ENCODE measurements at regions of chr16 and their contacts with region 1.

Region 1: GRCh38 chr16:70715055-70715858 is 29.4 kb upstream of the MTSS2 start:
- DNase-seq: peak; percentile 87 to 93
- ATAC-seq: peak; percentile 85 to 93
- H3K4me3 ChIP-seq: no peak overlapping the region
- H3K27ac ChIP-seq: peak overlapping the region; percentile 83 to 92
- H3K4me1 ChIP-seq: peaks cover 49% of the 10 kb centered on the region
- CTCF ChIP-seq: no peak
- EP300 ChIP-seq: peak in 1 of 2 experiments; percentile 40; a peak in 1 of 5 replicates
- POLR2A ChIP-seq: no peak
- RAD21 ChIP-seq: peak; percentile 38 to 49; a peak in 3 of 5 replicates

Region 2: GRCh38 chr16:69595127-69596036 is 1119.9 kb before region 1 on chr16:
- CTCF ChIA-PET with region 1: no interaction called
- POLR2A ChIA-PET with region 1: no interaction called
- DNase-seq: peak; percentile 28 to 37
- ATAC-seq: peak; percentile 82 to 86
- H3K4me3 ChIP-seq: peak overlapping the region; percentile 10; the same call in 2 of the 3 replicates
- H3K27ac ChIP-seq: peak overlapping the region; percentile 48 to 71
- H3K4me1 ChIP-seq: peaks cover 72% of the 10 kb centered on the region
- CTCF ChIP-seq: no peak
- EP300 ChIP-seq: no peak
- POLR2A ChIP-seq: no peak
- RAD21 ChIP-seq: no peak

Region 3: DNA sequence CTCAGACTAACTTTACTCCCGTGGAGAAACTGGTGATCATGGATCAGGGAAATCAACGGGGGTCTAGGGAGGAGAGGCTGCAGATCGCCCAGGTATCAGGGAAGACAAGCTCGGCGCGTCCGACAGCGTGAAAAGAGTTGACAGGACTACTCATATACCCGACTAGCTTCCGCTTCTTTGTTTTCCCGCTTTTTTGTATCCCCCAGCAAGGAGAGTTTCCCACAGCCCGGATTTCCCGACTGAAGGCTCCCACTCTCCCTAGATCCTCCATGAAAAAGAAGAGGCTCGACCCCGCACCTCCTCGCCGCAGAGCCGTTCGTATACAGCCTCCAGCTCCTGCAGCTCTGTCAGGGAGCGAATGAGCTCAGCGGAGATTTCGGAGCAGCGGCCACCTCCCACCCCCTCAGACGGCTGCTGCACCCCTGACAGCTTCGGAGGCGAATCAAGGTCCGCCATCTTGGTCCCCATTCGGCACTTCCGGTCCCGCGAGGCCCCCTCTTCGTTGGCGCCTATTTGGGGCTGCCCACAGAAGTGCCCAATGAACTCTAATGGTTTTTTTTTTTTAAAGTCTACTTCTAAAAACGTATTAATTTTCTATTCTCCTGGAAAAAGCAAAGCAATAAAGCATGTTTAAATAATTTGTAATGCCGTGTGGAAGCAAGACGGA is 192.0 kb before region 1 on chr16 and contains the start of gene COG4:
- CTCF ChIA-PET with region 1: interaction called, 3 read pairs
- POLR2A ChIA-PET with region 1: interaction called, 15 read pairs
- DNase-seq: peak; percentile 88
- ATAC-seq: peak; percentile 90 to 91
- H3K4me3 ChIP-seq: peak within 1 kb of the TSS; percentile 75
- H3K27ac ChIP-seq: peak within 1 kb of the TSS; percentile 86 to 93
- H3K4me1 ChIP-seq: peaks cover 37% of the 10 kb centered on the region
- CTCF ChIP-seq: no peak
- EP300 ChIP-seq: no peak
- POLR2A ChIP-seq: peak; percentile 77
- RAD21 ChIP-seq: no peak
- polyA plus RNA-seq, gene COG4: 48.2 and 53.1 TPM in 2 replicates

Region 4: DNA sequence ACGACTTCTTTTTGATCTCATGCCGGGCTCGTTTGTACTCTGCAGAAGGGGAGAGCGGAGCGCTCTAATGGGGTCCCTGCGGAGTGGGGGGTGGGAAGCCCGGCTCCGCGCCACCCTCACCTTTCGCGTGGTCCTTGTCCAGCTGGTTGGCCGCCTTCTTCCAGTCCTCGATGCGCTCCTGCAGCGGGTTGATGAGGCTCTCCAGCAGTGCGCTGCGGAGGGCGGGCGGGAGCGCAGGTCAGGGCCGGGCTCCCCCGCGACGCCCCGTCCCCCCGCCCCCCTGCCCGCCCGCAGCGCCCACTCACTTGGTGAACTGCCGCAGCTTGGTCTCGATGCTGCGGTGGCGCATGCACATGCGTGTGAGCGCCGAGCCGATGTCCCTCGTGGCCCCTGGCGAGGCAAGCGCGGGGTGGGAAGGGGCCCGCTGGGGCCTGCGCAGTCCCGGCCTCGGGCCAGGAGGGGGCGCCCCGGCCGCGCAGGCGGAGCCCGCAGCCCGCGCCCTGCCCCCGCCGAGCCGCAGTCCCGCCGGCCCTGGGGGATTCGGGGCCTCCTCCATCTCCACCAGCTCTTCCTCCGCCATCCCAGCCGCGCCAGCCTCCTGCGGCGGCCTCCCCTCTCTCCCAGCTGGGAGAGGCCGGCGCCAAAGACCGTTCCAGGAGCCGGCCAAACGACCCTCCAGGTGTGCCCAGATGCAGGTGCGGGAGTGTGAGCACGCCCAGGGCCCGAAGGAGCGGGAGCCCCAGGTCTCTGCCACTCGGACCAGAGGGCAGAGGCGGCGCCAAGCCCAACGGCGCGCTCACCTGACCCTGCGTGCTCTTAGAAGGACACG is 35.4 kb before region 1 on chr16:
- CTCF ChIA-PET with region 1: interaction called, 11 read pairs
- POLR2A ChIA-PET with region 1: no interaction called
- DNase-seq: peak in 1 of 2 experiments; percentile 54
- ATAC-seq: peak; percentile 37 to 57; a peak in 3 of 6 replicates
- H3K4me3 ChIP-seq: no peak overlapping the region
- H3K27ac ChIP-seq: peak overlapping the region; percentile 33 to 97; a peak in 3 of 6 replicates
- H3K4me1 ChIP-seq: peaks cover 54% of the 10 kb centered on the region
- CTCF ChIP-seq: peak; percentile 80
- EP300 ChIP-seq: no peak
- POLR2A ChIP-seq: no peak
- RAD21 ChIP-seq: peak; percentile 42 to 89; a peak in 4 of 5 replicates

Region 5: GRCh38 chr16:70685938-70686375 is 29.3 kb before region 1 on chr16 and contains the start of gene MTSS2:
- CTCF ChIA-PET with region 1: interaction called, 15 read pairs
- POLR2A ChIA-PET with region 1: no interaction called
- DNase-seq: peak; percentile 71 to 72
- ATAC-seq: peak; percentile 41 to 51
- H3K4me3 ChIP-seq: peak within 1 kb of the TSS; percentile 84
- H3K27ac ChIP-seq: peak within 1 kb of the TSS; percentile 92 to 97
- H3K4me1 ChIP-seq: peaks cover 84% of the 10 kb centered on the region
- CTCF ChIP-seq: no peak
- EP300 ChIP-seq: no peak
- POLR2A ChIP-seq: peak; percentile 25
- RAD21 ChIP-seq: 0 out of 5 replicates have a peak, but pooled peaks of 1 of the 2 experiments have one; percentile 21
- polyA plus RNA-seq, gene MTSS2: 10.8 and 13.1 TPM in 2 replicates

Region 6: DNA sequence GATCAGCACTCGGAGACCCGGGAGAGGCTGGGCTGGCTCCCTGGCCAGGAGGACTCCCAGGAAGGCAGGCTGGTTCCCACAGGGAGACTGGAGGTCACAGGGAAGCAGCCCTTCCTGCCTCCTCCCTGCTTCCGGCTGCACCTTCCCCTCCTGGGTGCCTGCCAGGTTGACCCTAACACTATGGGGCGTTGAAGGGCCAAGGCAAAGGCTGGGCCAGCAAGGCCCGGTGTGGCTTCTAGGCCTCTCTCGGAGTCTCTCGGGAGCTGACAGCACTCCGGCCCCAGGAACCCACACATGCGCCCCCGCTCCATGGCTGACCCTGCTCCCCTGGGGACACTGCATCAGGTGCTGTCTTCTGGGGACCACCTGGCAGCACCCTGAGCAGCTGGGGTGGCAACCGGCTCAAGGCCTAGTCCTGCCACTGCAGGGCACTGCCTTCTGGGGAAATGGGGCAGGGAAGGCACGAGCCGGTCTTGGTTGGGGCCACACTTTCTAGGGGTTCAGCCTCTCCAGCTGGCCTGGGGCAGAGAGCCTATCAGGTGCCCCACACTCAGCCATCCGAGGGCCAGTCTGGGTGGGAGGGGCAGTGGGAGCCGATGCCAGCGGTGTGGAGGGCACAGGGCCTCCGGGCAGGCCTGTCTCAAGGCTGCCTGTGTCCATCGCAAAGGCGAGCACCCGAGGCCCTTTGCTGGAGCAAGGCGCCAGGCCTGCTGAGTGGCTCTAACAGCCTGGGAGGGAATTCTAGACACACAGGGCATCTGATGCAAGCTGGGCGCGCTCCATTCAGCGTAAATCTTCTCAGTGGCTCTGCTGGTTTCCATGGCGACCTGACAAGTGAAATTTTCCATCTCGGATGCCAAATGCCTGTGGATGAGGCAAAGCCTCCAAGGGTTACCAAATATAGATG is 23.8 kb before region 1 on chr16:
- CTCF ChIA-PET with region 1: interaction called, 15 read pairs
- POLR2A ChIA-PET with region 1: no interaction called
- DNase-seq: peak in 1 of 2 experiments; percentile 67
- ATAC-seq: no peak; a peak in 1 of 6 replicates
- H3K4me3 ChIP-seq: no peak overlapping the region
- H3K27ac ChIP-seq: peak overlapping the region; percentile 97 to 100
- H3K4me1 ChIP-seq: peaks cover 97% of the 10 kb centered on the region
- CTCF ChIP-seq: no peak
- EP300 ChIP-seq: no peak
- POLR2A ChIP-seq: no peak
- RAD21 ChIP-seq: no peak

Region 7: DNA sequence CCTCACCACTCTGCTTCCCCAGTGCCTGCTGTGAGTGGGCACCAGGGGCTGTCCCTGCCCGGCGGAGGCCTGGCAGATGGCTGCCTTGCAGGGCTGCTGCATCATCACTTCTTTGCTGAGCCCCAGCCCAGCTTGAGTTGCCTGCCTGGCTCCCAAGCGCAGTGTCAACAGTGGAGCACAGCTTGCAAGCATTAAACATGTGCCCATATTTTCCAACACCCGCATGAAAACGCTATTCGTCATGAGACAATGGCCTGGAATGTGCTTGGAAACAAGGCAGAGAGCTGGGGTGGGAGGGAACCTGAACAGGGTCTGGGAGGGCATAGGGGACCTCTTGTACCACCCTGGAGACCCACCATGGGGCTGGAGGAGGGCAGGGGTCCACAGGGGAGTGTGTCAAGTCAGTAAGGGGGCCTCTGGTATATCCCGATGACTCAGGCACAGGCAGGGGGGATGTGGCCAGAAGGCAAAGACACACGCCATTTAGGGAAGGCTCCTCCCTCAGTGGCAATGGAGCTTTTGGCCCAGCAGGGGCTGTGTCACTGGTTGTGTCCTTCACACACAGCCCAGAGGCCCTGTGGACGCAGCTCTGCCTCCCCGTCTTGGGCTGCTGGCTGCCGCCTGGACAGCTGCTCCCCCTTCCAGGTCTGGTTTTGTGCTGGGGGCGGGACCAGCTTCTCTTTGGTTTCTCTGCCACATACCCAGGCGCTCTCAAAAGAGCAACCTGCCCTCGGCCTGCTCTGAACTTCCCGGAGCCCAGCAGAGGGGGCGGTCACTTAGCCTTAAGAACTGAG is 12.0 kb before region 1 on chr16:
- CTCF ChIA-PET with region 1: interaction called, 10 read pairs
- POLR2A ChIA-PET with region 1: no interaction called
- DNase-seq: peak in 1 of 2 experiments; percentile 40
- ATAC-seq: peak; percentile 35 to 60; a peak in 4 of 6 replicates
- H3K4me3 ChIP-seq: no peak overlapping the region
- H3K27ac ChIP-seq: peak overlapping the region; percentile 51 to 92; a peak in 4 of 6 replicates
- H3K4me1 ChIP-seq: peaks cover 71% of the 10 kb centered on the region
- CTCF ChIP-seq: no peak
- EP300 ChIP-seq: no peak
- POLR2A ChIP-seq: no peak
- RAD21 ChIP-seq: no peak

Region 8: GRCh38 chr16:70737377-70738082 is 22.3 kb after region 1 on chr16:
- CTCF ChIA-PET with region 1: interaction called, 10 read pairs
- POLR2A ChIA-PET with region 1: no interaction called
- DNase-seq: no peak
- ATAC-seq: no peak
- H3K4me3 ChIP-seq: no peak overlapping the region
- H3K27ac ChIP-seq: peak overlapping the region in 1 of 2 experiments; percentile 63; a peak in 3 of 6 replicates
- H3K4me1 ChIP-seq: peaks cover 17% of the 10 kb centered on the region
- CTCF ChIP-seq: no peak
- EP300 ChIP-seq: no peak
- POLR2A ChIP-seq: no peak
- RAD21 ChIP-seq: no peak